Activated CD4-positive, alpha-beta memory T cell treated with anti-CD3 and anti-CD28 coated beads, Interleukin-2, amount 10 ng/mL, durations not matched to agents 7 days and 5 days (primary cell): ENCODE measurements at regions of chr17 and their contacts with region 1.

Region 1: GRCh38 chr17:7931709-7932482 is at the starts of genes CNTROB and TRAPPC1:
- DNase-seq: peak; percentile 100
- H3K4me3 Mint-ChIP-seq: peak within 1 kb of the TSS; percentile 93
- H3K27ac Mint-ChIP-seq: peak within 1 kb of the TSS; percentile 87
- H3K4me1 Mint-ChIP-seq: peaks cover 56% of the 10 kb centered on the region
- H3K27me3 Mint-ChIP-seq: no peaks in the 10 kb centered on the region
- total RNA-seq, gene CNTROB: 58.8 to 64.6 TPM
- total RNA-seq, gene TRAPPC1: 238 to 244 TPM

Region 2: GRCh38 chr17:7763919-7764318 is 168.0 kb before region 1 on chr17:
- CTCF ChIA-PET with region 1: no interaction called
- POLR2A ChIA-PET with region 1: no interaction called
- DNase-seq: no peak
- H3K4me3 Mint-ChIP-seq: no peak overlapping the region
- H3K27ac Mint-ChIP-seq: no peak overlapping the region
- H3K4me1 Mint-ChIP-seq: no peaks in the 10 kb centered on the region
- H3K27me3 Mint-ChIP-seq: peaks cover 12% of the 10 kb centered on the region

Region 3: DNA sequence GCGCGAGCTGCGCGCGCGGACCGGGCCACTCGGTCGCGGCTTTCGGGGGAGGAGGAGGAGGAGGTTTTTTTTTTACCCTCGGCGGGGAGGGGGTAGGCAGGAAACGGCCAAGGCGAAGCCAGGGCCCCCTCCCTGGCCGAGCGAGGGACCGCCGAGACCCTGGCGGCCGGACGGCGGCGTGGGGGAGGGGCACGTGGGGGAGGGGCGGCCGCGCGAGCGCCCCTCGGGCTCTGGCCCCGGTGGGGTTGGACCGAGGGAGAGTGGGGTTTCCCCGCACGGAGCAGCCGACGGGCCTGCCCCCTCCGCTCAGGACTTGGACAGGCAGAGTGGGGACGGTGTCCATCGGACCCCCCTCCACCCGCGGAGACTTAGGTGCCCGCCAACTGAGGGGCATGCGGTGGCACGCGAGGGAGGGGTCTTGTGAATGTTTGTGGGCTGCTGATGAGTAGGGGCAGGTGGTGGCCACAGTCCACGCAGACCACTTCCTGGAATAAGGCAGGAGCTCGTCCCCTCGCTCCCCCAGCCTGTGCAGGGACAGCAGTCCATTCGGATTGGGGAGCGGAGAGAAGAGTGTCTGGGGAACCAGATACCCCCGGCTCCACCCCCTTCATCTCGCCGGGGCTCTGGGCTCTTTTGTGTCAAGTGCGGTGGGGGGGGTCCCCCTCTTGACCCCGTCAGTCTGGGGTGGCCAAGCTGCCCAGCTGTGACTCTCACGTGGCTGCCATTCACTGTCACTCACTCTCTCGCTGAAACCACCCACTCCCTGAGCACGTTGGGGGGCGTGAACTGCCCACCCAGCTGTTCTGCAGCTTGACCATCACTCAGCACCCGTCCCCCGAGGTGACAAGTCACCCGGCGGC is 46.3 kb before region 1 on chr17:
- CTCF ChIA-PET with region 1: no interaction called
- POLR2A ChIA-PET with region 1: interaction called, 10 read pairs
- DNase-seq: peak; percentile 53
- H3K4me3 Mint-ChIP-seq: no peak overlapping the region
- H3K27ac Mint-ChIP-seq: peak overlapping the region; percentile 55
- H3K4me1 Mint-ChIP-seq: peaks cover 3% of the 10 kb centered on the region
- H3K27me3 Mint-ChIP-seq: no peaks in the 10 kb centered on the region

Region 4: GRCh38 chr17:7915611-7916382 is 16.1 kb before region 1 on chr17 and contains the start of gene RNF227:
- CTCF ChIA-PET with region 1: interaction called, 6 read pairs
- POLR2A ChIA-PET with region 1: interaction called, 144 read pairs
- DNase-seq: peak; percentile 84
- H3K4me3 Mint-ChIP-seq: peak within 1 kb of the TSS; percentile 90
- H3K27ac Mint-ChIP-seq: peak within 1 kb of the TSS; percentile 88
- H3K4me1 Mint-ChIP-seq: peaks cover 35% of the 10 kb centered on the region
- H3K27me3 Mint-ChIP-seq: no peaks in the 10 kb centered on the region
- total RNA-seq, gene RNF227: 3.6 to 3.7 TPM

Region 5: GRCh38 chr17:7944326-7944725 is 12.4 kb after region 1 on chr17:
- CTCF ChIA-PET with region 1: interaction called, 18 read pairs
- POLR2A ChIA-PET with region 1: interaction called, 32 read pairs
- DNase-seq: no peak
- H3K4me3 Mint-ChIP-seq: no peak overlapping the region
- H3K27ac Mint-ChIP-seq: no peak overlapping the region
- H3K4me1 Mint-ChIP-seq: peaks cover 6% of the 10 kb centered on the region
- H3K27me3 Mint-ChIP-seq: no peaks in the 10 kb centered on the region

Region 6: GRCh38 chr17:7951143-7951803 is 19.4 kb after region 1 on chr17:
- CTCF ChIA-PET with region 1: interaction called, 18 read pairs
- POLR2A ChIA-PET with region 1: interaction called, 50 read pairs
- DNase-seq: peak; percentile 67
- H3K4me3 Mint-ChIP-seq: peak overlapping the region; percentile 15
- H3K27ac Mint-ChIP-seq: peak overlapping the region; percentile 91
- H3K4me1 Mint-ChIP-seq: peaks cover 47% of the 10 kb centered on the region
- H3K27me3 Mint-ChIP-seq: no peaks in the 10 kb centered on the region

Region 7: GRCh38 chr17:7982666-7983065 is 50.8 kb after region 1 on chr17:
- CTCF ChIA-PET with region 1: interaction called, 18 read pairs
- POLR2A ChIA-PET with region 1: interaction called, 54 read pairs
- DNase-seq: no peak
- H3K4me3 Mint-ChIP-seq: no peak overlapping the region
- H3K27ac Mint-ChIP-seq: no peak overlapping the region
- H3K4me1 Mint-ChIP-seq: peaks cover 17% of the 10 kb centered on the region
- H3K27me3 Mint-ChIP-seq: peaks cover 19% of the 10 kb centered on the region